SK-N-SH (cell line): ENCODE measurements at regions of chr22 and their contacts with region 1.

Region 1: DNA sequence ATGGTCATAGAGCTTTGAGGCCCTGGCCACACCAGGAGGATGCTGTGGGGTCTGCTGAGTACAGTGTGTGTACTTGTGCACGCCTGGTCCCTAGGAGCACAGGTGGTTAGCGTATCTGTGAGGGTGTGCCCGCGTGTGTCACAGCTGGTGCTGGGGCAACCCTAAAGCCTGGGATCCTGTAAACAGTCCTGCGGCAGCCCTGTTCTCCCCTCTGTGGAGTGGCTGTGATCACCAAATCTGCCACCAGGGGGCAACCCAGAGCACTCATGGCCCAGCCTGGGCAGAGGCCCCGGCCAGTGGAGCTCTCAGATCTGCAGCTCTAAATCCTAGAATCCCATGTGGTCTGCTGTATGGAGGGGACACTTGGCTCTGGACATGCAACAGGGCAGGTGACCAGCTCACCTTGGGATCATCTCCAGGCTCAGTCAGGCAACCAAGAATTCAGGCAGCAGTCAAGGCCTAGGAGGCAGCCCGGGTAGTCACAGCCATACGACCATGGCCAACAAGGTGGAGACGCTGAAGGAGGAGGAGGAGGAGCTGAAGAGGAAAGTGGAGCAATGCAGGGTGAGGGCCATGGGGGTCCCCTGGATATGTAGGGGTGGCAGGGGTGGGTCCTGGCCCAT is 3.9 kb downstream of the SH3BP1 start:
- DNase-seq: peak; percentile 91
- H3K4me3 ChIP-seq: peak overlapping the region in 1 of 2 experiments; percentile 42; a peak in 1 of 4 replicates
- H3K27ac ChIP-seq: no peak overlapping the region; a peak in 1 of 4 replicates
- H3K4me1 ChIP-seq: peaks cover 4 to 26% of the 10 kb centered on the region in 2 experiments; a peak in 2 of 4 replicates
- H3K27me3 ChIP-seq: no peaks in the 10 kb centered on the region
- CTCF ChIP-seq: peak; percentile 90
- EP300 ChIP-seq: no peak
- RAD21 ChIP-seq: peak; percentile 76

Region 2: GRCh38 chr22:37623075-37624016 is 20.0 kb before region 1 on chr22:
- CTCF ChIA-PET with region 1: interaction called, 898 read pairs
- POLR2A ChIA-PET with region 1: no interaction called
- DNase-seq: peak; percentile 94
- H3K4me3 ChIP-seq: no peak overlapping the region
- H3K27ac ChIP-seq: peak overlapping the region in 1 of 2 experiments; percentile 56; a peak in 1 of 4 replicates
- H3K4me1 ChIP-seq: peaks cover 0 to 4% of the 10 kb centered on the region in 2 experiments; a peak in 1 of 4 replicates
- H3K27me3 ChIP-seq: no peaks in the 10 kb centered on the region
- CTCF ChIP-seq: peak; percentile 89
- EP300 ChIP-seq: no peak
- RAD21 ChIP-seq: peak; percentile 65

Region 3: GRCh38 chr22:37696657-37697537 is 53.6 kb after region 1 on chr22 and contains the start of gene TRIOBP:
- CTCF ChIA-PET with region 1: interaction called, 55 read pairs
- POLR2A ChIA-PET with region 1: no interaction called
- DNase-seq: peak; percentile 95
- H3K4me3 ChIP-seq: peak within 1 kb of the TSS; percentile 57 to 82
- H3K27ac ChIP-seq: peak within 1 kb of the TSS; percentile 57 to 80
- H3K4me1 ChIP-seq: peaks cover 6 to 11% of the 10 kb centered on the region in 2 experiments; a peak in 2 of 4 replicates
- H3K27me3 ChIP-seq: no peaks in the 10 kb centered on the region
- CTCF ChIP-seq: peak; percentile 61
- EP300 ChIP-seq: peak in 1 of 2 experiments; percentile 24; a peak in 1 of 4 replicates
- RAD21 ChIP-seq: peak; percentile 64
- polyA plus RNA-seq, gene TRIOBP: 43.6 and 47.3 TPM in 2 replicates

Region 4: GRCh38 chr22:37752466-37753087 is 109.2 kb after region 1 on chr22:
- CTCF ChIA-PET with region 1: interaction called, 12 read pairs
- POLR2A ChIA-PET with region 1: no interaction called
- DNase-seq: peak; percentile 94
- H3K4me3 ChIP-seq: 0 out of 4 replicates have a peak overlapping the region, but pooled peaks of 1 of the 2 experiments have one; percentile 1
- H3K27ac ChIP-seq: peak overlapping the region; percentile 77 to 96
- H3K4me1 ChIP-seq: peaks cover 40 to 51% of the 10 kb centered on the region in 2 experiments
- H3K27me3 ChIP-seq: no peaks in the 10 kb centered on the region
- CTCF ChIP-seq: peak; percentile 25; the same call in 1 of the 2 replicates
- EP300 ChIP-seq: peak; percentile 78 to 88
- RAD21 ChIP-seq: peak; percentile 36

Region 5: GRCh38 chr22:37910890-37911743 is 267.8 kb after region 1 on chr22:
- CTCF ChIA-PET with region 1: no interaction called
- POLR2A ChIA-PET with region 1: no interaction called
- DNase-seq: no peak
- H3K4me3 ChIP-seq: no peak overlapping the region
- H3K27ac ChIP-seq: no peak overlapping the region
- H3K4me1 ChIP-seq: peaks cover 0 to 11% of the 10 kb centered on the region in 2 experiments; a peak in 1 of 4 replicates
- H3K27me3 ChIP-seq: no peaks in the 10 kb centered on the region
- CTCF ChIP-seq: no peak
- EP300 ChIP-seq: no peak
- RAD21 ChIP-seq: no peak